Calu3 (cell line): ENCODE measurements at regions of chr13 and their contacts with region 1.

Region 1: DNA sequence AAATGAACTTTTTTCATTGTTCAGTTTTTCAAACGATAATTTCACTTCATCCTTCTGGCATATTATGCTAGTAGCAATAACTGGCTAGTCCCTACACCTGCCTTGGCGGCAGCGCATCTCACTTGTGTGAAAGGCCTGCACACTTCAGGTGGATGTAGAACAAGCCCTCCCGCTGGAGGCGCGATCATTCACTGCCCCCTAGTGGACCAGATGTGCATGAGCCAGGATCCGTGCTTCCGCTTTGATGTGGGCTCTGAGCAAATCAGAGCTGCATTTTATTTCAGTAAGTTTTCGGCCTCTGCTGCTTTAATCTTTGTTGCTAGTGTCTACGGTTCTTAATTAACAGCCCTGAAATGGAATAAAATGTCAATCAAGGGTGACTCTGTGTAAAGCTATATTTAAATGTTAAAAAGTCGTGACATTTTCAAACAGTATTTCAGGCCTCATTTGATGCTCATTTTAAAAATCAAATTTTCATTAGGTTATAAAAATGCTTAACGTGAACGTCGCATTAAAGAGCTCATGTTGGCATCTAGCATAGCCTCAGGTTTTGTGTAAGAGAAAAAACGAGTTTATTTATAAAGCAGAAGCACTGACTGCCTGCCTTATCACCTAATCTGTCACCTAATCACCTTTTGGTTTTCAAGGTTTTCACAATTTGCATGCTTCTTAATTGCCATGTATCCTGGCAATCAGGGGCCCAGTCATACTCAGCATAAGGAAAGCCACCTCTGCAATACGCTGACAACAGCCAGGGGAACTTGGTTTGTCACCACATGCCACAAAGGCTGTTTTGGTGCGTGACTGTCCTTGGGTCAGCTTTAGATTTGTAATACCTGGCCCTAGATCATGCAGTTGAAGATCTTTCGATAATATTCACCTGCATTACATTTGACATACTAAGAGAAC is 112.2 kb downstream of the TEX26 start:
- DNase-seq: peak; percentile 82
- H3K4me3 Mint-ChIP-seq: no peak overlapping the region
- H3K27ac Mint-ChIP-seq: peak overlapping the region; percentile 92
- H3K4me1 Mint-ChIP-seq: peaks cover 11% of the 10 kb centered on the region
- H3K27me3 Mint-ChIP-seq: no peaks in the 10 kb centered on the region
- CTCF ChIP-seq: peak; percentile 86

Region 2: GRCh38 chr13:30465585-30466357 is 578.9 kb before region 1 on chr13 and contains the start of gene HMGB1:
- CTCF ChIA-PET with region 1: no interaction called
- intact Hi-C with region 1: loop called (anchors 10 kb)
- DNase-seq: peak; percentile 91
- H3K4me3 Mint-ChIP-seq: peak within 1 kb of the TSS; percentile 83
- H3K27ac Mint-ChIP-seq: peak within 1 kb of the TSS; percentile 99
- H3K4me1 Mint-ChIP-seq: no peaks in the 10 kb centered on the region
- H3K27me3 Mint-ChIP-seq: no peaks in the 10 kb centered on the region
- CTCF ChIP-seq: no peak
- total RNA-seq, gene HMGB1: 344 and 410 TPM in 2 replicates

Region 3: GRCh38 chr13:30673669-30674521 is 370.7 kb before region 1 on chr13:
- CTCF ChIA-PET with region 1: no interaction called
- intact Hi-C with region 1: loop called (anchors 10 kb)
- DNase-seq: peak; percentile 88
- H3K4me3 Mint-ChIP-seq: peak overlapping the region; percentile 70
- H3K27ac Mint-ChIP-seq: peak overlapping the region; percentile 75
- H3K4me1 Mint-ChIP-seq: no peaks in the 10 kb centered on the region
- H3K27me3 Mint-ChIP-seq: no peaks in the 10 kb centered on the region
- CTCF ChIP-seq: no peak

Region 4: GRCh38 chr13:30880856-30881155 is 163.8 kb before region 1 on chr13:
- CTCF ChIA-PET with region 1: no interaction called
- intact Hi-C with region 1: no loop called
- DNase-seq: no peak
- H3K4me3 Mint-ChIP-seq: no peak overlapping the region
- H3K27ac Mint-ChIP-seq: no peak overlapping the region
- H3K4me1 Mint-ChIP-seq: peaks cover 7% of the 10 kb centered on the region
- H3K27me3 Mint-ChIP-seq: no peaks in the 10 kb centered on the region
- CTCF ChIP-seq: no peak

Region 5: DNA sequence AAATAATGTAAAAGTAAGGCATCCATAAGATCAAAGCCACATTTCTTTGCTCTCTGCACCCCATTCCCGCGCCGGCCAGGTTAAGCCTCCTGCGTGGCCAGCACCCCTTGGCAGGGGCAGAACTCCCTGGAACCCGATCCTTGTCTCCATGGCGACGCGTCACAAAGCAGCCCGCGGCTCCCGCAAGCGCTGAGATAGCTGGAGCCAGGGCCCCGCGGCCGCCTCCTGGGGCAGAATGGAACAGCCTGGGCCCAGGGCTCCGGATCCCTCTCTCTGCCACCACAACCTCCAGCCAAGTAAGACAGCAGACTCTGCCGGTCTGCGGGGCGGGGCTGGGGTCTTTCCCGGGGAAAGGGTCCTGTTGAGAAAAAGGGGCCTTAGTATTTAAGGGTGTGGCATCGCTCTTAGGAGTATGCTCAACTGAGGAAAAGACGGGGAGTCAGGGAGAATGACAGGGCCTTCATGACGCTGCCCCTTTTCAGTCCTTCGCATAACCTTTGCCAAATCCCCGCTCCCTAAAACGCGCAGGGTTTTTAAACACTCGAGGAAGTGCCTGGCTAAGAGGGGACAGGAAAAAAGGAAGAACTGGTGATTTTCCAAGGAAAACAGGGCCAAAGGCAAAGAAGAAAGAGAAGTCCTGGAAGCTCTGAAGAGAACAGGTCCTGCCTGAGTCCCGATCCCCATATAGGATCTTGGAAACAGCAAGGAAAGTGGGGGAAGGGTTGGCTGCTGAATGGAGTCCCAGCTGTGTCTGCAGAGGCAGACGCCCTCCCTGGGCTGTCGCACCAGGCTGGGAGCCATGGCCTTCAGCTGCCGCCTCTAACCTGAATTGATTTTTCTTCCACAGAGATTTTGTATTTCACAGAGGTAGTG is 111.9 kb before region 1 on chr13 and contains the start of gene TEX26:
- CTCF ChIA-PET with region 1: no interaction called
- intact Hi-C with region 1: no loop called
- DNase-seq: no peak
- H3K4me3 Mint-ChIP-seq: no peak within 1 kb of the TSS
- H3K27ac Mint-ChIP-seq: no peak within 1 kb of the TSS
- H3K4me1 Mint-ChIP-seq: peaks cover 14% of the 10 kb centered on the region
- H3K27me3 Mint-ChIP-seq: no peaks in the 10 kb centered on the region
- CTCF ChIP-seq: no peak
- total RNA-seq, gene TEX26: not detected in 2 replicates

Region 6: DNA sequence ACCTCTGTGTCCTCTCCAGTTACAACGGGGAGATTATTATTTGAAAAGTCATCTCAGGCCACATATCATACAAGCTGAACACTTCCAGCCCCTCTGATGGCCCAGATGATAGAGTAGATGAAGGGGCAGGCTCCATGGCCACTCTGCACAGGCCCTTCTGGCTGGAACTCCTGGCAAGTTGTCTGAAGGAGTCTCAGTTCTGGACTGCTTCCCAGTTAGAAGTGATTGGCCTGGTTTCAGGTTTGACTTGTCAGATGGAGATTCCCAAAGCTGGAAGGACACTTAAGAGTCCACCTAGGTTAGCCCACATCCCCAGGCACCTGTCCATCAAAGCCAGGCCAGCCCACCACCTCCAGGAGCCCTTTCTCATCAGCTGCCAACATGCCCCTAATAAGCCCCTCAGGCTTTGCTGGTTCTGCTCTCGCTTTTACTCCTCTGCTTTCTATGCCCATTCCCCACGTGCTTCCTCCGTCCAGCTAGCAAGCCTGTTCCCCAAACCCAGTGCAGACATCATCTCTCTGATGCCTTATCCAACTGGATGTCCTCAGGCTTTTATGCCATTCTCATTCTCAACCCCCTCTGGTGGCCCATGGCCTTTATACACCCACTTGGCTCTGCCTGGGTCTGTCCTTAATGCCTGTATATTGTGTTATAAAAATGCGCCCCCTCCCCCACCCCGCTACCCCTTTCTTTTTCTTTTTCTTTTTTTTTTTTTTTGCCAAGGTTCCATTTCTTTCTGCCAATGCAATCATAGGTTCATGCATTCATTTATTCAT is 60.6 kb after region 1 on chr13:
- CTCF ChIA-PET with region 1: no interaction called
- intact Hi-C with region 1: no loop called
- DNase-seq: no peak
- H3K4me3 Mint-ChIP-seq: no peak overlapping the region
- H3K27ac Mint-ChIP-seq: no peak overlapping the region
- H3K4me1 Mint-ChIP-seq: no peaks in the 10 kb centered on the region
- H3K27me3 Mint-ChIP-seq: peaks cover 41% of the 10 kb centered on the region
- CTCF ChIP-seq: no peak